ENCODE measurements at regions of chr1 and their contacts with region 1.

Region 1: GRCh38 chr1:227787513-227788270 is 27.8 kb upstream of the PRSS38 start:
- DNase-seq: peak; percentile 92
- H3K4me3 ChIP-seq: peak overlapping the region; percentile 58
- H3K27ac ChIP-seq: no peak overlapping the region
- H3K4me1 ChIP-seq: peaks cover 6% of the 10 kb centered on the region
- CTCF ChIP-seq: no peak

Region 2: DNA sequence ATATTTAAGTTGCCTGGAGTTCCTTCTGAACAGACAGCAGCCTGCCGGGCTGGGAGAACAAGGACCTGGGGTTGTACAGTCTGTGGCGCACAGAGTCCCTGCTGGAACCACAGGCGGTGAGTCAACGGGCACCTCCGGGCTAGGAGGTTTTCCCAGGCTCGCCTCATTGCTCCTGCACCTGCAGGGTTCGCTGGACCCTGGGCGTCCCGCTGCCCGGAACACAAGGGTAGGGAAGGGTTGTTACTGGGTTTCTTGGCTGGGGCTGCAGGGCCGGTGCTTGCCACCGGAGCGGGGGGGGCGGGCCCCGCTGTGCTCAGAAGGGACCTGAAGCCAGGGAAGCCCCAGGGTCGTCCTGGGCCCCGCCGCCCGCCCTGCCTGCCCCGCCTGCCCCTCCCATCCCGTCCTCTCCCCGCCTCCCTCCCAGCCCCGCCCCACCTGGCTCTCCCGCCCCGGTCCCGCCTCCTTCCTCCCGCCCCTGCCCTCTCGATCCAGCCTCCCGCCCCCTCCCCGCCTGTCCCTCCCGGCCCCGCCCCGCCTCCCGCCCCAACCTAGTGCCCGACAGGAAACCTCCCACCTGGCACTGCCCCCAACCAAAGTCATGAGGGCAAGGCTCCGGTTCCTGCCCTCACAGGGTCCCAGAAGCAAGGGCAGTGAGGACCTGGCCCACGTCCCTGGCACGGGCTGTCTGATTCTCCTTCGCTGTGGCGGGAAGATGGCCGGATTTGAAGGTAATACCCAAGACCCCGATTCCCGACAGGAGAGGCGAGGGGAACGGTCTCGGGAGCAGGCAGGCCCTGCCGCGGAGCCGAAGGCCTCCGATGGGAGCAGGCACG is 59.4 kb before region 1 on chr1:
- CTCF ChIA-PET with region 1: no interaction called
- POLR2A ChIA-PET with region 1: no interaction called
- intact Hi-C with region 1: loop called (anchors 5 kb)
- DNase-seq: peak; percentile 79
- H3K4me3 ChIP-seq: peak overlapping the region; percentile 69
- H3K27ac ChIP-seq: peak overlapping the region; percentile 10
- H3K4me1 ChIP-seq: peaks cover 31% of the 10 kb centered on the region
- CTCF ChIP-seq: no peak

Region 3: GRCh38 chr1:227762233-227762911 is 25.3 kb before region 1 on chr1:
- CTCF ChIA-PET with region 1: interaction called, 12 read pairs
- POLR2A ChIA-PET with region 1: no interaction called
- intact Hi-C with region 1: no loop called
- DNase-seq: peak; percentile 67
- H3K4me3 ChIP-seq: no peak overlapping the region
- H3K27ac ChIP-seq: no peak overlapping the region
- H3K4me1 ChIP-seq: peaks cover 4% of the 10 kb centered on the region
- CTCF ChIP-seq: peak; percentile 87

Region 4: GRCh38 chr1:228082135-228082891 is 294.6 kb after region 1 on chr1 and contains the start of gene ARF1:
- CTCF ChIA-PET with region 1: no interaction called
- POLR2A ChIA-PET with region 1: no interaction called
- intact Hi-C with region 1: loop called (anchors 5 kb)
- DNase-seq: peak; percentile 97
- H3K4me3 ChIP-seq: peak within 1 kb of the TSS; percentile 84
- H3K27ac ChIP-seq: peak within 1 kb of the TSS; percentile 62
- H3K4me1 ChIP-seq: peaks cover 29% of the 10 kb centered on the region
- CTCF ChIP-seq: no peak
- total RNA-seq, gene ARF1: 125 and 163 TPM in 2 replicates